ENCODE measurements at regions of chr2 and their contacts with region 1.

Region 1: DNA sequence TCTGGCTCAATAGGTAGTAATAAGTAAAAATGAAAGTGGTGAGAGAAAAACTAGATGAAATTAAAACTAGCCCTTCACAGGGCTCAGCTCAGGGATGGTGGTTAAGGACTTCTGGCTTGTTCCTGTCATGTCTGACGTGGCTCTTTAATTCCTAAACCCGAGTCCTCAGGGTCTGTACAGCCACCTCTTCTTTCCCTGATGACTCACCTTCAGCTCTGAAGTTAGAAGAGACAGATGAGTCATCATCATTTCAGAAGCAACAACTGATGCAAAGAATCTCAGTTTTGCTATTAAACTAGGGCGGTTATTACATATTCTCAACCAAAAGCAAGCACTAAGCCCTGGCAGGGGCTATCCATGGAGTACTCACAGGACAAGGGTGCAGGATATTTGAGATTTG is 24.0 kb upstream of the ITGB6 start:
- DNase-seq: peak in 1 of 2 experiments; percentile 93
- H3K4me3 ChIP-seq: no peak overlapping the region
- H3K27ac ChIP-seq: peak overlapping the region; percentile 100
- H3K4me1 ChIP-seq: peaks cover 98% of the 10 kb centered on the region
- H3K27me3 ChIP-seq: no peaks in the 10 kb centered on the region
- CTCF ChIP-seq: no peak

Region 2: DNA sequence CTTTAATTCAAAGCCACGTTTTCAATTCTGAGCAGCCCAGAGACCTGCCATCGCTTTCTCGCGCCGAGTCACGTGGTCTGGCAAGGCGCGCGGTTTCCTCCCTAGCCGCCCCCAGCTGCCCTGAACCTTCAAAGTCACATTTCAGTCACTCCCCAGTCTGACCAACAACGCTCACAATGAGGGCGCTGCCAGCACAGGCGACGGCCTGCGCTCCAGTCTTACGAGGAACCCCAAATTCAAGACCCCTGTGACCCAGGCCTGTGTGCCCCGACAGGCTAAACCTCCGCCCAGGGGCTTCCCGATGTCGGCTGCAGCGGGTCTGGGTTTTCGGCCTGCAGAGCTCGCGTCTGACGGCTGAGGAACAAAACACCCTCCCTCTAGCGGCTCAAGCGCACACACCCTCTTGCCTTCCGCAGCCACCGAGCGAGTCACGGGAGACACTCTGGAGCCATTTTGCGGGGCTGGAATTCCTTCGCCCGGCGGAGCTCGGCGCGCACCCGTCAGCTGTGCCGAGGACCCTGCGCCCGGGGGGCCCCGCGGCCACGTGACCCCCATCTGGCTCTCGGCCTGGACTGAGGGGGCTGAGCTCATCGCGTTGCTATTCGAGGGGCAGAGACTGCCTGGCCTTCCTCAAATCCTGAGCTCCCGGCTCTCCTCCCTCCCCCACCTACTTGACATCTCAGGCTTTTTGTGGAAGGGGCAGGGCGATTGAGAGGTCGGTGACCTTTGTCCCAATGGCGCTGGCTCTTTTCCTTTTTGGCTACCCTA is 45.9 kb after region 1 on chr2:
- CTCF ChIA-PET with region 1: no interaction called
- POLR2A ChIA-PET with region 1: interaction called, 8 read pairs
- intact Hi-C with region 1: loop called (anchors 1 kb)
- DNase-seq: peak; percentile 78
- H3K4me3 ChIP-seq: peak overlapping the region; percentile 52; the same call in 1 of the 2 replicates
- H3K27ac ChIP-seq: peak overlapping the region; percentile 86
- H3K4me1 ChIP-seq: peaks cover 26% of the 10 kb centered on the region
- H3K27me3 ChIP-seq: no peaks in the 10 kb centered on the region
- CTCF ChIP-seq: peak; percentile 59

Region 3: DNA sequence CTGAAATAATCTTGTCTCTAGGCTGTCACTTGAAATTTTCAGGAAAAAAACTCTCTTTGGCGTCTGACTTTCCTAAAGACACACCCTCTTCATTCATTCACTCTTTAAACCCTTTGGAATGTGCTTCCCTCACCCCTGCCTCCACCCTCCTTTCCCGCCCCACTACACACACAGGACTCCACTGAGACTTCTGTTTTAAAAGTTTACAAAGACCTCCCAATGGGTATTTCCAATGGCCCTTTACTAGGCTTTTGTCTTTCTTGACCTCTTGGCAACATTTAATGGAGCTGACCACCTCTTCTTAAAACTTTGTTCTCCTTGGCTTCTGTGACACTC is 173.4 kb after region 1 on chr2:
- CTCF ChIA-PET with region 1: no interaction called
- POLR2A ChIA-PET with region 1: interaction called, 3 read pairs
- intact Hi-C with region 1: loop called (anchors 2 kb)
- DNase-seq: no peak
- H3K4me3 ChIP-seq: no peak overlapping the region
- H3K27ac ChIP-seq: peak overlapping the region; percentile 53
- H3K4me1 ChIP-seq: peaks cover 30% of the 10 kb centered on the region
- H3K27me3 ChIP-seq: no peaks in the 10 kb centered on the region
- CTCF ChIP-seq: no peak

Measured in PC-9 (cell line).